Activated CD8-positive, alpha-beta T cell treated with anti-CD3 and anti-CD28 coated beads for 36 hours (primary cell): ENCODE measurements at regions of chr5 and their contacts with region 1.

Region 1: GRCh38 chr5:157271740-157272271 is 5.9 kb downstream of the CYFIP2 start:
- DNase-seq: peak; percentile 97
- ATAC-seq: peak; percentile 80
- H3K4me3 Mint-ChIP-seq: peak overlapping the region; percentile 83
- H3K27ac Mint-ChIP-seq: peak overlapping the region; percentile 98
- H3K4me1 Mint-ChIP-seq: peaks cover 80% of the 10 kb centered on the region
- H3K27me3 Mint-ChIP-seq: no peaks in the 10 kb centered on the region
- CTCF ChIP-seq: no peak

Region 2: DNA sequence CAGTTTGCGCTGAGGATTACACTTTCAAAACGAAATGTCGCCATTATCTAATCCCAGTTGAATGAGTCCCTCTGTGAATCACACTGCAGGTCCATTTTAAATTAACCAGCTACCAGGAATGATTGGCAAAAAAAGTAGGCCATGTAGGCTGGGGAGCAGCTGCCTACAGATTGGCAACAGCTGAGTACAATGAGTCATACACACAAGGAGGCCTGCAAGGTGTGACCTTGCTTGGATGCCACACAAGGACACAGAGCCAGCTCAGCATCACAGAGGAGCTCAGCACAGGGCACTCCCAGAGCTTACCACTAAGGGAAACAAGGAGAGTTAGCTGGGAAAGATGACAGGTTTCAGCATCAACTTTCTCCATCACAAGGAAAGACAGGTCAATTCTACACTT is 225.8 kb before region 1 on chr5:
- CTCF ChIA-PET with region 1: no interaction called
- POLR2A ChIA-PET with region 1: no interaction called
- intact Hi-C with region 1: no loop called
- DNase-seq: peak; percentile 56
- ATAC-seq: peak; percentile 90
- H3K4me3 Mint-ChIP-seq: no peak overlapping the region
- H3K27ac Mint-ChIP-seq: peak overlapping the region; percentile 35
- H3K4me1 Mint-ChIP-seq: peaks cover 51% of the 10 kb centered on the region
- H3K27me3 Mint-ChIP-seq: no peaks in the 10 kb centered on the region
- CTCF ChIP-seq: no peak

Region 3: GRCh38 chr5:157148734-157149615 is 122.8 kb before region 1 on chr5:
- CTCF ChIA-PET with region 1: interaction called, 14 read pairs
- POLR2A ChIA-PET with region 1: interaction called, 3 read pairs
- intact Hi-C with region 1: loop called (anchors 5 kb)
- DNase-seq: peak; percentile 91
- ATAC-seq: peak; percentile 45
- H3K4me3 Mint-ChIP-seq: peak overlapping the region; percentile 6
- H3K27ac Mint-ChIP-seq: peak overlapping the region; percentile 80
- H3K4me1 Mint-ChIP-seq: peaks cover 46% of the 10 kb centered on the region
- H3K27me3 Mint-ChIP-seq: no peaks in the 10 kb centered on the region
- CTCF ChIP-seq: peak; percentile 89

Region 4: GRCh38 chr5:157180374-157181264 is 91.2 kb before region 1 on chr5 and contains the start of gene ITK:
- CTCF ChIA-PET with region 1: interaction called, 5 read pairs
- POLR2A ChIA-PET with region 1: interaction called, 30 read pairs
- intact Hi-C with region 1: no loop called
- DNase-seq: peak; percentile 59
- ATAC-seq: peak; percentile 62
- H3K4me3 Mint-ChIP-seq: peak within 1 kb of the TSS; percentile 99
- H3K27ac Mint-ChIP-seq: peak within 1 kb of the TSS; percentile 100
- H3K4me1 Mint-ChIP-seq: peaks cover 40% of the 10 kb centered on the region
- H3K27me3 Mint-ChIP-seq: no peaks in the 10 kb centered on the region
- CTCF ChIP-seq: no peak
- total RNA-seq, gene ITK: 229 to 236 TPM

Region 5: DNA sequence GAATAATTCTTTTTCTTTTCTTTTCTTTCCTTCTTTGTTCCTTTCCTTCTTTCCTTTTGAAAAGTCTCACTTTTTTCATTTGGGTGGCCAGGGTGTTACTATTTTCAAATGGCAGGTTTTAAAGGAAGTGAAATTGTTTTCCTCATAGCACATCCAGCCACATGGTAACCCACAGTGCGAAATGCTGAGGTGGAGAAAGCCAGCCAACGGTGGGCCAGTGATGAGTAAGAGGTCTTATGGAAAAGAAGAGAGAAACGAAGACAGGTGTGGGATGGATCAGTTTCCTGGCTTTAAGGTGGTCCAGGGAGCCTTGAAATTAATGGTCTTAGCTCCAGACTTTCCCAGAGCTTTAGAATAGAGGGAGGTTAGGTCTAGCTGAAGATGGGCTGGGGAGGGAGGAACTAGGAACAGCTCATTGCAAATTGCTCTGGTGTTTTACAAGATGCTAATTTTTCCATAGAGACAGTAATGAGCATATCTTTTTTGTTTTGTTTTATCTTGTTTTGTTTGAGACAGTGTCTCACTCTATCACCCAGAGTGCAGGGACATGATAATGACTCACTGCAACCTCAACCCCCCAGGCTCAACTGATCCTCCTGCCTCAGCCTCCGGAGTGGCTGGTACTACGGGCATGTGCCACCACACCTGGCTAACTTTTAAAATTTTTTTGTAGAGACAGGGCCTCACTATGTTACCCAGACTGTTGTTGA is 73.4 kb before region 1 on chr5:
- CTCF ChIA-PET with region 1: interaction called, 3 read pairs
- POLR2A ChIA-PET with region 1: interaction called, 10 read pairs
- intact Hi-C with region 1: no loop called
- DNase-seq: peak; percentile 82
- ATAC-seq: peak; percentile 74
- H3K4me3 Mint-ChIP-seq: peak overlapping the region; percentile 68
- H3K27ac Mint-ChIP-seq: peak overlapping the region; percentile 100
- H3K4me1 Mint-ChIP-seq: peaks cover 87% of the 10 kb centered on the region
- H3K27me3 Mint-ChIP-seq: no peaks in the 10 kb centered on the region
- CTCF ChIP-seq: no peak

Region 6: GRCh38 chr5:157236423-157236822 is 35.4 kb before region 1 on chr5:
- CTCF ChIA-PET with region 1: no interaction called
- POLR2A ChIA-PET with region 1: no interaction called
- intact Hi-C with region 1: no loop called
- DNase-seq: no peak
- ATAC-seq: no peak
- H3K4me3 Mint-ChIP-seq: no peak overlapping the region
- H3K27ac Mint-ChIP-seq: peak overlapping the region; percentile 63
- H3K4me1 Mint-ChIP-seq: peaks cover 65% of the 10 kb centered on the region
- H3K27me3 Mint-ChIP-seq: no peaks in the 10 kb centered on the region
- CTCF ChIP-seq: no peak

Region 7: GRCh38 chr5:157253547-157253946 is 18.3 kb before region 1 on chr5:
- CTCF ChIA-PET with region 1: interaction called, 38 read pairs
- POLR2A ChIA-PET with region 1: interaction called, 98 read pairs
- intact Hi-C with region 1: no loop called
- DNase-seq: no peak
- ATAC-seq: no peak
- H3K4me3 Mint-ChIP-seq: peak overlapping the region; percentile 28
- H3K27ac Mint-ChIP-seq: peak overlapping the region; percentile 95
- H3K4me1 Mint-ChIP-seq: peaks cover 94% of the 10 kb centered on the region
- H3K27me3 Mint-ChIP-seq: no peaks in the 10 kb centered on the region
- CTCF ChIP-seq: peak; percentile 81

Region 8: DNA sequence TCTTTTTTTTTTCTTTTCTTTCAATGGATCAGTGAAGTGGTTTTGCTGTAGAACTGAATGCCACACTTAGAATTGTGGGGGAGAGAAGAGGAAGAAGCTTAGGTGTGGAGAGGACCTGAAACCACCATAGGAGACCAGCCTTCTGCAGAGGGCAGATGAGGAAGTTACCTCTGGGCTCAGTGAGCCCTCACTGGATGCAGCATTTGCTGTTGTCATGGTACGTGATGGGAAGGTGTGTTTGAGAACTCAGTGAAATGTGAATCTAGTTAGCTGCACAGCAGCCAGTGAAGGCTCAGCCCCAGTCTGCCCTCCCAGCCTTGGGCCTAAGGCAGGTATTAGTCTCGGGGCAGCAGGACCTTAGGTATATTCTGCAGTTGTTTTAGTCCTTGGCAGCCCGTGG is 11.6 kb after region 1 on chr5:
- CTCF ChIA-PET with region 1: interaction called, 3 read pairs
- POLR2A ChIA-PET with region 1: interaction called, 18 read pairs
- intact Hi-C with region 1: no loop called
- DNase-seq: peak; percentile 36
- ATAC-seq: peak; percentile 76
- H3K4me3 Mint-ChIP-seq: peak overlapping the region; percentile 1
- H3K27ac Mint-ChIP-seq: peak overlapping the region; percentile 79
- H3K4me1 Mint-ChIP-seq: peaks cover 88% of the 10 kb centered on the region
- H3K27me3 Mint-ChIP-seq: no peaks in the 10 kb centered on the region
- CTCF ChIP-seq: no peak